ENCODE measurements at regions of chr1 and their contacts with region 1.

Region 1: GRCh38 chr1:107936498-107937481 is 28.2 kb downstream of the VAV3 start:
- DNase-seq: peak; percentile 71
- H3K4me3 Mint-ChIP-seq: no peak overlapping the region
- H3K27ac Mint-ChIP-seq: no peak overlapping the region
- H3K4me1 Mint-ChIP-seq: peaks cover 58% of the 10 kb centered on the region
- H3K27me3 Mint-ChIP-seq: no peaks in the 10 kb centered on the region

Region 2: DNA sequence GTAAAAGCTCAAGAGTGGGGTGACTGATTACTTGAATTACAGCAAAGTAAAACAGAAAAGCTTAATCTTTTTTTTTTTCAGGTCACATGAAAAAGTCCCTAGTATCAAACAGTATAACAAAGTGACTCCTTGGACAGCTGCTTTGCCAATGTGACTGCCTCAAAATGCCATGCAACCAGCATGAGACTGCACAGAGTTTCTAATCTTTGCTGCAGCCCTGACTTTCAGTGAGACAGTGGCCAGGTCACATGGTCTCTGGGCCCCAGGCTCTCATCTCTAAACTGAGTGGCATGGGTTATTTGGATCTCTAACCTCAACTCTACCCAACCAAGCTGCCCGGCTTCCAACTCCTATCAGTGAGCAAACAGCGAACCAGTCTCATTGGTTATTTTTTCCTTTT is 140.8 kb before region 1 on chr1:
- CTCF ChIA-PET with region 1: no interaction called
- intact Hi-C with region 1: loop called (anchors 2 kb)
- DNase-seq: peak; percentile 25
- H3K4me3 Mint-ChIP-seq: no peak overlapping the region
- H3K27ac Mint-ChIP-seq: no peak overlapping the region
- H3K4me1 Mint-ChIP-seq: peaks cover 25% of the 10 kb centered on the region
- H3K27me3 Mint-ChIP-seq: no peaks in the 10 kb centered on the region

Region 3: DNA sequence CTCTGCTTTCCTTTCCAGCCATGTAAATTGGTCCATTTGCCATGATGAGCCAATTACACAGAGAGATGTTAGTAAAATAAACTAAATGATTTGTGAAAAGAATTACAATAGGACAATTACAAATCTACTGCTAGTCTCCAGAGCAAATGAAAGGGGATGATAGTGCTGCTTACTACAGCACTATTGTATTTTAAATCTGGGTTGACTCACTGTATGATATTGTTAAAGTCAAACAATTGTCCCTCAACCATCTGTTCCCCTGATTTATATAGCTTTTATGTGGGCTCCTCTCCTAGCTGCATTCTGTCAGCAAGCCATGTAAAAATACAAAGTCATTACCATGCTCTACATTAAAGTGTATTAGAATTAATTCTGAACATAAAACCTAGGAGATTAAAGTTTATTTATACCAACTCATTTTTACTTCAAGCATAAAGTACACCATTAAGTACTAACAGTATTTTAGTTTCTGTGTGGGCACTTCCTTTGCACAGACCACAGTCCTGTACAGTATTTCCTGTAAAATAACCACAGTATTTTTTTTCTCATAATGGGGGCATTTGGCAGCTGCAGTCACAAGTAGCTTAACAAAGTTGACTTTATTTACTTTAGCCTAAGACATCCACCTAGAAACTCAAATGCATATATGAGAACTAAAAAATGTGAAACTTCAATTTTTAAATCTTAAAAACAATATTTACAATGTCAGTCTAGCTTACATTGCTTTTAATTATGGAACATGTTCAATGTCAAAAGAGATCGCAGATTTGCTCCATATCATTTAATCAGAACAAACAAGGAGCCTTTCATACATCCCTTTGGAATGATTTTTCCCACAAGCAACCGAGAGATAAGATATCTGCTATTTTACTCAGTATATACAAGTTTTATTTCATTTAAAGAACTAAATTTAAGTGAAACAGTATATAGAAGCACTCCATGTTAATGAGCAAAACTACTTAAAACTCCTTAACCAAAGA is 107.4 kb before region 1 on chr1:
- CTCF ChIA-PET with region 1: no interaction called
- intact Hi-C with region 1: loop called (anchors 2 kb)
- DNase-seq: no peak
- H3K4me3 Mint-ChIP-seq: no peak overlapping the region
- H3K27ac Mint-ChIP-seq: no peak overlapping the region
- H3K4me1 Mint-ChIP-seq: peaks cover 29% of the 10 kb centered on the region
- H3K27me3 Mint-ChIP-seq: no peaks in the 10 kb centered on the region

Region 4: DNA sequence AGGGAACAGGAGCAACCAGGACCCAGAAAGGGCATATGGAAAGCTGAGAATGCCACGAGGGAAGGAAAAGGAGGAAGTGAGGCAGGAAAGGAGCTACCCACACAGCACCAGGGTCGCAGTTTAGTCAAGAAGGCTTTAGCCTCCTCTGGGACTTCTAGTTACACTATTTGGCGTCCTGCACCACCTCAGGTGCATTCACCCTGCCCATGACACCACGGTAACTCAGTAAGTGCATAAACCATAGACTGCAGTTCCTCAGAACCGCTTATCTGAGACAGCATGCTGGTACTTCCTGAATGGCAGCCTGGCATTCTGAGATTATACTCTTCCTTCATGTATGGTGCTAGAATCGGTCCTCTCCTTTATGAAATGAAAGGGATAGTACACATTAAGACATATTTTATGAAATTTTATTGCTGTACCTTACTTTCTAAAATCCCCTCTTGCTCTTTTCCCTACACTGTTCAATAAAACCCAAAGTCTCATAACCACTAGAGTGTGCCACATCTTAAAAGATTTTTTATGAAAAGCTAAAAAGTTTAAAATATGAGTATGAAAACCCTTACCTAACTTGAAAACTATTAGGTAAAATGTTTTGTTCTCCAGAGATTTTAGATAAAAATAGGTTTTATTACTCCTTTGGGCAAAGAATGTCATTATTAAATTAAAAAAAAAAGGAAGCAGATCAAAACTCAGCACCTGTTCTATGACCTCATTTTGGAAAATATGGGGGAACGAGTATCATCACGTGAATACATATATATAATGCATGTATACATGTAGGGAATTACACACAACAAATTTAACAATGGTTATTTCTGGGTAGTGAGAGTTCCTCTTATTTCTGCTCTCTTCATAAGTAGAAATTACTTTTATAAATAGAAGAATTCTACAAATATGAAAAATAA is 39.1 kb before region 1 on chr1:
- CTCF ChIA-PET with region 1: no interaction called
- intact Hi-C with region 1: loop called (anchors 2 kb)
- DNase-seq: no peak
- H3K4me3 Mint-ChIP-seq: peak overlapping the region; percentile 25
- H3K27ac Mint-ChIP-seq: peak overlapping the region; percentile 78
- H3K4me1 Mint-ChIP-seq: peaks cover 40% of the 10 kb centered on the region
- H3K27me3 Mint-ChIP-seq: no peaks in the 10 kb centered on the region

Region 5: DNA sequence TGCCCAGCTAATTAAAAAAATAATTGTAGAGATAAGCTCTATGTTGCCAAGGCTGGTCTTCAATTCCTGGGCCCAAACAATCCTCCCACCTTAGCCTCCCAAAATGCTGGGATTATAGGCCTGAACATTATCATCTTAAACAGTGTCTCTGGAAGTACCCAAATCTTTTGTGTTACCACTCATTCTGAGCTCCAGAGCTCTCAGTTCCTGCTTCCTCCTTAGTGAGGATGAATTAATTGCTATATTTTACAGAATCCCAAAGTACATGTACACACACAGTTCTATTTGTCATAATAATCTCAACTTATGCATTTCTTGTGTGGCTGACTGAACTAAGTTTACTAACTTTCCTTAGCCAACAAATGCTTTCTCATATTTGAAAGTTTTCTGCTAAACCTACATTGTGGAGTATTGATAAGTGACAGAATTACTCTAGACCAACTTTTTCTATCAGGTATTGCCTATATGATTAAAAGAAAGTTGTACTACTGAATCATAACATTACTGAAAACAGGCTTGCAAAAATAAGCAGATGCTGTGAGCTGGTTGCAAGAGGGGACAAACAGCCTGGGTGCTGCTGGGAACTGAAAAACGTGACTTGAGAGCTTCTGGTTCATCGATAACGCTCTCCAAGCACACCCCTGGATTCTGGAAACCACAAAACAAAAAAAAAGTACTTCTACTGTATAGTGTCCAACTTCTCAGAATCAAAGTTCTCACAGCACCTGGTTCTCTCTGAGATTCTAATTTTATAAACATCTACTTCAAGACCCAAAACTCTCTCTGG is 12.9 kb after region 1 on chr1:
- CTCF ChIA-PET with region 1: interaction called, 4 read pairs
- intact Hi-C with region 1: loop called (anchors 1 kb)
- DNase-seq: peak; percentile 34
- H3K4me3 Mint-ChIP-seq: no peak overlapping the region
- H3K27ac Mint-ChIP-seq: no peak overlapping the region
- H3K4me1 Mint-ChIP-seq: peaks cover 24% of the 10 kb centered on the region
- H3K27me3 Mint-ChIP-seq: no peaks in the 10 kb centered on the region

Region 6: GRCh38 chr1:108079440-108080025 is 142.7 kb after region 1 on chr1:
- CTCF ChIA-PET with region 1: no interaction called
- intact Hi-C with region 1: loop called (anchors 1 kb)
- DNase-seq: peak; percentile 82
- H3K4me3 Mint-ChIP-seq: no peak overlapping the region
- H3K27ac Mint-ChIP-seq: peak overlapping the region; percentile 84
- H3K4me1 Mint-ChIP-seq: peaks cover 66% of the 10 kb centered on the region
- H3K27me3 Mint-ChIP-seq: no peaks in the 10 kb centered on the region